ENCODE measurements at regions of chr19 and their contacts with region 1.

Region 1: DNA sequence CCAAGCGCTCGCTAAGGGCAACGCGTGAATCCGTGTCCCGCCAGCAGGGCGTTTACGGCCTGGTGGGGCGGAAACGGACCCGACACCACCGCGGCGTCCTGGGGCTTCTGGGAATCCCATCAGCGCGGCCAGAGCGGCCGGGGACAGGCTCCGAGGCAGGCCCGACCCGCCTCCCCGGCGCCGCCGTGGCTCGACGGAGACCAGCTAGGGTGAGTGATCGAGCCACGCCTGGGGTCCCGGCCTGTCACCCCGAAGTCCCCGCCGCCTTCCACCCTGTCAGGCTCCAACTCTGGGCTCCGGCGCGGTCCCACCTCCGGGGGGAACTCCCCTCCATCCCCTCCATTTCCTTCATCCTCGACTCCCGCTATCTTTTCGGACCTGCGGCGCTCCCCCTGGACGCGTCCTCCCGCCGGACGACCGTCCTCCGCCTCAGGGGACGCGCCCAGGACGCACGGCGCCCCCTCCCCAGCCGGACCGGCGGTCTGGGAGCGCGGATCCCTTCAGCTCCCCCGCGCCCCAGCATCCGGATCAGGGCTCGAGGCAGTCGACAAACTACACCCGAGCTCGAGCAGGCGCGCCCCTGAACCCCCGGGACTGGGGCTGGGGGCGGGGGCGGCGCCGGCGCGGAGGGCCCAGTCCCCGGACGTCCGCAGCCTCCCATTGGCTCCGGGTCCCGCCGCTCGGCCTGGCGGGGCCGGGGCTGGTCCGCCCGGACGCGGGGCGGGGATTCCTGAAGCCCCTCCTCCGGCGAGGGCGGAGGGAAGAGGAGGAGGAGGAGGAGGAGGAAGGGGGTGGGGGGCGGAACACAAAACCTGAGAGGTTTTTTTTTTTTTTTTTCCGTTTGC is 638 bp upstream of the BICRA start:
- DNase-seq: peak; percentile 94
- H3K4me3 ChIP-seq: peak overlapping the region; percentile 92 to 99 (median 98)
- H3K27ac ChIP-seq: peak overlapping the region; percentile 85
- H3K4me1 ChIP-seq: peaks cover 12% of the 10 kb centered on the region
- H3K27me3 ChIP-seq: no peaks in the 10 kb centered on the region
- CTCF ChIP-seq: peak in 1 of 2 donors; percentile 28

Region 2: GRCh38 chr19:47447470-47448359 is 160.6 kb before region 1 on chr19:
- CTCF ChIA-PET with region 1: no interaction called
- dilution Hi-C with region 1: loop called (anchors 5 kb)
- in situ Hi-C with region 1: no loop called
- intact Hi-C with region 1: no loop called
- DNase-seq: peak; percentile 49
- H3K4me3 ChIP-seq: no peak overlapping the region
- H3K27ac ChIP-seq: no peak overlapping the region
- H3K4me1 ChIP-seq: peaks cover 5% of the 10 kb centered on the region
- H3K27me3 ChIP-seq: peaks cover 27% of the 10 kb centered on the region
- CTCF ChIP-seq: no peak

Region 3: DNA sequence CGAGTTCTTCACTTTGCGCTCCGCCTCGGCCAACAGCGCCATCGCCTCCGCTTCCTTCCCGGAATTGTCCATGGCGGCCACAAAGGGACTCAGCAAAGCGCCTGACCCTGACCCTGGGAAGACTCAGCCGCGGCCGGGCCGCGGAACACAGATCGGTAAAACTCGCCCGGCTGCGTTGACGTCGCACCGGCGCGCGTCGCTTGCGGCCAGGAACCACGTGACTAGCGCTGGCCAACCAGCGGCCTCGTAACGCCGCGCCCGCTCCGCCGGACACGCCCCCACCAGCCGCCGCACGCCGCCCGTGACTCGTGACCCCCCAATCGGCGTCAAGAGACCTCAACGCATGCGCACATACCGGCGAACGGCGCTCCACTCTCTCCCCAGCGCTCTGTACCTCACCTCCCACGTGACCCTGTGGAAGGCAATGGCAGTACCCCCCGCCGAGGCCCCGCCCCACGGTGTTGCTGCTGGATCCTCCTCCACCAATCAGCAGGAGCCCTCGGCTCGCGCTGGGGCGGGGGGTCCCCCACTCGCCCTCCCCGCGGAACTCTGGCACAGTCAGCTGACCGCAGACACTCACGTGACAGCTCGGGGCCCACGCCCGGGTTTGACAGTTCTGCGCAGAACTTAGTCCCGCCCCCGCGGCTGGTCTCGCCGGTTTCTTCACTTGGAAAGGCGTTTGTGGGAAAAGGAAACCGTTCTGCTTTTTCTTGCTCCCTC is 93.3 kb before region 1 on chr19 and contains the start of gene NAPA:
- CTCF ChIA-PET with region 1: interaction called, 3 read pairs
- dilution Hi-C with region 1: no loop called
- in situ Hi-C with region 1: loop called in 1 of 2 experiments (anchors 5 kb)
- intact Hi-C with region 1: loop called (anchors 1 kb)
- DNase-seq: peak; percentile 100
- H3K4me3 ChIP-seq: peak within 1 kb of the TSS; percentile 84 to 99 (median 91)
- H3K27ac ChIP-seq: peak within 1 kb of the TSS; percentile 85
- H3K4me1 ChIP-seq: peaks cover 26% of the 10 kb centered on the region
- H3K27me3 ChIP-seq: no peaks in the 10 kb centered on the region
- CTCF ChIP-seq: no peak
- total RNA-seq, gene NAPA: 46.0 to 70.7 TPM

Region 4: DNA sequence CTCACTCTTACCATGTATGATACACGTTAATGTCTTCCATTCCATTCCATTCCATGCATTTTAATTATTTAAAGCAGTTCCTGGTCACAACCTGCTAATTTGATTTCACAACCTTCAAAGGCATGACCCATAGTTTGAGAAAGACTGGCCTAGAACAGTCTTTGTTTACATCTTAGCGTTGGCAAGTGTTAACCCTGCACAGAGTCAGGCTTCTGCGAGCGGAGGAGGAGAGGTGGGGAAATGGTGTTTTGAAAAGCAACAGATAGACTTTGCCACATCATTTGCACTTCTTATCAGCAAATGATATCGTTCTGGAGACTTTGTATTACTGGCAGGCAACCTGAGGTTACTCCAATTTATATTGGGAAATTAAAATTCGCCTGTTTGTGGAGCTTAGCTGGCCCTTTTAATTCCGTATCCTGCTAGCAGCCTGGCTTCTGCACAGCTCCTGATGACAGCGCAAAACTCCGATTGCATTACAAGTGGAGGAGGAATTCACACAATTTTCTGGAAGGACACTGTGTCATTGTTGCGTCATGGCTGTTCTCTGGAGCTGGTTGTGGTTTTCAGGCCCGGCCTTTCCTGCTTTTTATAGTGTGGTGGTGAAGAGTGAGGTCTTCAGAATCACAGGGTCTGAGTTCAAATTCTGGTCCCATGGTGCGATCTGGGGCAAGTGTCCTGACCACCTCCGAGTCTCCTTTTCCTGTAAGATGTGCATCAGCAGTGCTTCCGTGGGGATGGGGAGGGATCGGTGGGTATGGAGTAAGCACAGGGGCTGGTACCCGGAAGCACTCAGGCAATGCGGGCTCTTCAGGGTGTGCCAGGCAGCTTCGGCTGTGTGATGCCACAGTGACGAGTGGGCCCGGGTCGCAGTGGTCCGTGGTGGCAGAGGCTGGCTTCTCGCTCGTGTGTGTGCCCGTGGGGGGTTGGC is 55.8 kb after region 1 on chr19:
- CTCF ChIA-PET with region 1: no interaction called
- dilution Hi-C with region 1: loop called (anchors 5 kb)
- in situ Hi-C with region 1: no loop called
- intact Hi-C with region 1: loop called (anchors 1 kb)
- DNase-seq: peak; percentile 95
- H3K4me3 ChIP-seq: no peak overlapping the region
- H3K27ac ChIP-seq: peak overlapping the region; percentile 87
- H3K4me1 ChIP-seq: peaks cover 42% of the 10 kb centered on the region
- H3K27me3 ChIP-seq: no peaks in the 10 kb centered on the region
- CTCF ChIP-seq: no peak

Region 5: GRCh38 chr19:47697863-47698609 is 89.7 kb after region 1 on chr19:
- CTCF ChIA-PET with region 1: interaction called, 5 read pairs
- dilution Hi-C with region 1: no loop called
- in situ Hi-C with region 1: no loop called
- intact Hi-C with region 1: loop called (anchors 1 kb)
- DNase-seq: peak; percentile 72
- H3K4me3 ChIP-seq: no peak overlapping the region
- H3K27ac ChIP-seq: no peak overlapping the region
- H3K4me1 ChIP-seq: no peaks in the 10 kb centered on the region
- H3K27me3 ChIP-seq: no peaks in the 10 kb centered on the region
- CTCF ChIP-seq: peak; percentile 99

Region 6: DNA sequence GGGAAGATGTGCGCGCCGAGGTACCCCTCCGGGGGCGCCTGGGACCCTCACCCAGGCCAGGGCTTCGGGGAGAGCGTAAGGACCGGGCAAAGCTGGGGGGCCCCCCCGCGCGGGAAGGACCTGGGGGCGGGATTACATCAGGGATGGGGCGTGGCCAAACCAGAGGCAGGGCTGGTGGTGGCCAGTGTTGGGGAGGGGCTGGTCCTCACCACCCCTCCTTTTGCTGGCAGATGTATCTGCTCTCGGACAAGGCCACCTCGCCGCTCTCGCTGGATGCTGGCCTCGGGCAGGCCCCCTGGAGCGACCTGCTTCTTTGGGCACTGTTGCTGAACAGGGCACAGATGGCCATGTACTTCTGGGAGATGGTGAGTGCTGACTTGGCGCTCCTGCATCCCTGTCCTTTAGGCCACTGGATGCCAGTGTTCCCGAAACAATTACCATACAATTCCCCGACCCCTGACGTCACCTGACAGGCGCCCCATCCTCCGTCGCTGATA is 1574.6 kb after region 1 on chr19:
- CTCF ChIA-PET with region 1: no interaction called
- dilution Hi-C with region 1: no loop called
- in situ Hi-C with region 1: no loop called
- intact Hi-C with region 1: no loop called
- DNase-seq: no peak
- H3K4me3 ChIP-seq: no peak overlapping the region
- H3K27ac ChIP-seq: no peak overlapping the region
- H3K4me1 ChIP-seq: no peaks in the 10 kb centered on the region
- H3K27me3 ChIP-seq: no peaks in the 10 kb centered on the region
- CTCF ChIP-seq: no peak

Measured in mammary epithelial cell (primary cell).